Activated T-helper 2 cell treated with anti-CD3 and anti-CD28 coated beads, Interferon-gamma antibody, Interleukin-2, Interleukin-4, amounts not matched to agents 10 μg/mL and 5 μg/mL and 100 μg/mL, durations not matched to agents 14 hours and 24 hours and 36 hours (primary cell): ENCODE measurements at regions of chr12 and their contacts with region 1.

Region 1: GRCh38 chr12:62466594-62467491 is at the start of gene MON2:
- DNase-seq: peak; percentile 83
- H3K4me3 Mint-ChIP-seq: peak within 1 kb of the TSS; percentile 94
- H3K27ac Mint-ChIP-seq: peak within 1 kb of the TSS; percentile 91
- H3K4me1 Mint-ChIP-seq: peaks cover 20% of the 10 kb centered on the region
- H3K27me3 Mint-ChIP-seq: peaks cover 3% of the 10 kb centered on the region
- total RNA-seq, gene MON2: 33.0 and 37.6 TPM in 2 replicates

Region 2: GRCh38 chr12:62522984-62523383 is 56.1 kb after region 1 on chr12:
- intact Hi-C with region 1: loop called (anchors 2 kb)
- DNase-seq: no peak
- H3K4me3 Mint-ChIP-seq: no peak overlapping the region
- H3K27ac Mint-ChIP-seq: no peak overlapping the region
- H3K4me1 Mint-ChIP-seq: peaks cover 31% of the 10 kb centered on the region
- H3K27me3 Mint-ChIP-seq: no peaks in the 10 kb centered on the region